B cell (primary cell): ENCODE measurements at regions of chr15 and their contacts with region 1.

Region 1: GRCh38 chr15:51731549-51732267 is 5.7 kb downstream of the LYSMD2 start:
- DNase-seq: peak; percentile 91
- ATAC-seq: peak; percentile 72
- H3K4me3 ChIP-seq: peak overlapping the region; percentile 24 to 76 (median 53)
- H3K4me3 Mint-ChIP-seq: peak overlapping the region; percentile 88
- H3K27ac ChIP-seq: peak overlapping the region; percentile 85 to 92
- H3K27ac Mint-ChIP-seq: peak overlapping the region; percentile 94
- H3K4me1 ChIP-seq: peaks cover 93 to 100% of the 10 kb centered on the region in 2 donors
- H3K4me1 Mint-ChIP-seq: peaks cover 94% of the 10 kb centered on the region
- H3K27me3 ChIP-seq: no peaks in the 10 kb centered on the region
- H3K27me3 Mint-ChIP-seq: no peaks in the 10 kb centered on the region
- CTCF ChIP-seq: no peak

Region 2: DNA sequence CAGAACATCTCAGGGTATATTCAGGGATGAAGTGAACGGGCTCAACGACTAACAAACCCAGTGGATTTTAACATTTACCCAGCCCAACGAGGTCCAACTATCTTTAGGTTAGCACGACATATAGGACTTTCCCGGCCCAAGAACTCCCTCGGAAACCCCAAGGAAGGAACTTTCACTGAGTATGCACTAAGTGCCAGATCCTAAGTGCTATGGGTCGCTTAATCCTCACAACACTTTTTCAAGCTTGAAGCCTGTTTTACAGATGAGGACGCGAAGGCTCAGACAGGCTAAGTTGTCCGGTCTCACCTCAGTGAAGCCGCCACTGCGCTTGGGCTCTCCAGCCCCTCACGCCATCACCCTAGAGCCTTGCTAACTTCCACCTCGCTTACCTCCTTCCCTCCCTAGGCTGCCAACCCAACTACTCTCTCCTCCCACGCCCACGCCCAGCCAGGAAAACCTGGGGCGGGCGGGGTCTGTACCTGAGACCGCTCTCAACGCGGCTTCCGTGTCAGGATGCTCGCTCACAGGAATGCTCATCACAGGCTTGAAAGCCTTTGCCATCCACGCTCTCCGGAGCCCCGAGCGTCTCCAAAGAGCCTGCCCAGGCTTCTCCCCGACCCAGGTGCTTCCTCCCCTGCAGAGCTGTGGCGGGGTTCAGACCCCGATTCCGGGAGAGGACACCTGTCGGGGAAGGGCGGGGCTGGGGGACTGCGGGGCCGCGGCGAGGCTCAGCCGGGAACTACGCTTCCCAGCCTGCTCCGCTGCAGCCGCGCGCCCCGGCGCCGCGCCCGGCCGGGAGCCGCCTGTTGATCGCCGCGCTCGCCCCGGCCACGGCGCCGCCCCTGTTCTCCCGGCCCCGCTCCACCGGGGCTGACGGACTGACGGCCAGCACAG is 19.3 kb after region 1 on chr15 and contains the start of gene TMOD2:
- CTCF ChIA-PET with region 1: interaction called, 13 read pairs
- POLR2A ChIA-PET with region 1: interaction called, 16 read pairs
- intact Hi-C with region 1: loop called (anchors 1 kb)
- DNase-seq: peak; percentile 68
- ATAC-seq: peak; percentile 84
- H3K4me3 ChIP-seq: peak within 1 kb of the TSS; percentile 32 to 72 (median 63)
- H3K4me3 Mint-ChIP-seq: peak within 1 kb of the TSS; percentile 95
- H3K27ac ChIP-seq: peak within 1 kb of the TSS; percentile 18 to 31
- H3K27ac Mint-ChIP-seq: peak within 1 kb of the TSS; percentile 87
- H3K4me1 ChIP-seq: peaks cover 14 to 24% of the 10 kb centered on the region in 2 donors
- H3K4me1 Mint-ChIP-seq: peaks cover 43% of the 10 kb centered on the region
- H3K27me3 ChIP-seq: no peaks in the 10 kb centered on the region
- H3K27me3 Mint-ChIP-seq: no peaks in the 10 kb centered on the region
- CTCF ChIP-seq: no peak
- total RNA-seq, gene TMOD2: 25.9 and 30.3 TPM in 2 replicates